ENCODE measurements at regions of chr6 and their contacts with region 1.

Region 1: DNA sequence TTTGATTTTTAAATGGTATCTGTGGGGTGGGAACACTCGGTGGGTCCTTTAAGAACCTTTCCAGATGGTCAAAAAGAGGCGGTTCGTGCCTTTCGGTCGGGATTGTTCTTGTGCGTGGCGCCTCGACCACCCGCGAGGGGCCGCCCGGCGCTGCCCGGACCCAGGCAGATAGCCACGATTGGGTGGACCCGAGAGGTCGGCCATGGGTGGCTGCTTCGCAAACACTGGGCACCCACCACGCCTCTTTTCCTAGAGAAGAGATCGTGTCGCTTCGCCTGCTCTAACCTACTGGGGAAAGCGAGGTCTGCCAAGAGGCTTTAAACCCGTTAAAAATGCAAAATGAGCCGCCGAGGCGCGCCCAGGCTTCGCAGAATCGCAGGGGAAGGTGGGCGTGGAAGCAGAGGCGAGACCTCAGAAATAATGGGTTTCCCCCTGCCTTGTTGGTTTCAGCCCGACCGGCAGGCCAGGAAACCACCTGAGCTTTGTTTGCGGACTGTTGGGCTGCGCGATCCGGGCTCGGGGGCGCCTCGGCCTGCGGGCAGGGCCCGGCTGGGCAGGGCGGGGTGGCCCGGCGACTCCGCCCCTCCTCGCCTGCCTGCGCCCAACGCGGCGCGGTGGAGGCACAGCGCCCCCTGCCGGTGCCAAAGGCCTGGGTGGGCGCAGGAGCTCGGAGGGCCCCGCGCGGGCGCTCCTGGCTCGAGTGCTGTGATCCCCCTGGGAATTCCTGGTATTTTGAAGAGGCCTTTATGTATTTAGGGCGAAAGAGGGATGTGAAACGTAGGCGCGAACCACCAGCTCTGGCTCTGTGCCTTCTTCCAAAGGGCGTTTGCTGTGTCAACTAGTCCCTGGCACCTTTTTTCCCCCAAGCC is 1.6 kb downstream of the MARCKS start:
- DNase-seq: peak; percentile 90 to 93
- H3K4me3 ChIP-seq: peak overlapping the region; percentile 81
- H3K4me1 ChIP-seq: peaks cover 17% of the 10 kb centered on the region
- H3K27me3 ChIP-seq: no peaks in the 10 kb centered on the region

Region 2: DNA sequence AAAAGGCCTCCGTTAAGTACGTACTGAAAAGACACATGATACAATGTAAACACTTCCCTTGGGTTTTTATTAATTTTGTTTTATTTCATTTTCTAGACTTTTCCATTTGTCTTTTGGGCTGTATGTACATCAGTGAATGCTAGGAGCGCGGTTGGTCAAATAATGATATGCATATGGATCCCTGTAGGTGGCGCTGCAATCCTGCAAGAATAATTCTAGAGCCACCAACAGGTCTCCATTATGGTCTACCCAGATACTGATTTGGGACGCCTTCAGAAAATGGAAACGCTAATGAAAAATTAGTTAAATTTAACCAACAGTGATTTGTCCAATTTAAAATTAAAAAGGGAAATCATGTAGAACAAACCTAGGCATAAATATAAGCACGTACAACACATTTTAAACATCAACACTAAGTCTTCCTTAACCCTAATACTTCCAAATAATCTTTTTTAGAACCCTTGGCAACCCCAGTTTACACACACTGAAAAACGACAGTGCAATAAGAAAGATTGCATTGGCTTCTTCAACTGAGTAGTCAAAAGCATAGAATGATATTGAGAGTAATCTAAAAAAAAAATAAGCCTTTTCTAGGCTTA is 1078.1 kb before region 1 on chr6:
- in situ Hi-C with region 1: loop called (anchors 25 kb)
- DNase-seq: peak; percentile 77 to 85
- H3K4me3 ChIP-seq: no peak overlapping the region
- H3K4me1 ChIP-seq: no peaks in the 10 kb centered on the region
- H3K27me3 ChIP-seq: no peaks in the 10 kb centered on the region